ENCODE measurements at regions of chr4 and their contacts with region 1.

Region 1: DNA sequence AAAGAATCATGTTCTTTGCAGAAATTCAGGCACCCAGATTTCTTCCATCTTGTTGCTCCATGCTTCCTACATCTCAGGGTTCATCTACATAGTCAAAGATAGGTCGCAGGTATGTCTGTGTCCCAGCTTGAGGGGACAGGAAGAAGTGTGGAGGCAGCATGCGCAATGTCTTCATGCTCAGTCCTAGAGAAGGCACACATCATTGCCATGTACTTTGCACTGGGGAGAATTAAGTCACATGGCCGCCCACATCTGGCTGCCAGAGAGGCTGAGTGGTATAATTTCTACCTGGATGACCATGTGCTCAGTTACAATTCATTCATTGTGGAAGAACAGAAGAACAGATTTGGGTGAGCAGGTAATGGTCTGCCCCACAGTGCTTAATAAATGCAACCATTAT is 54.1 kb downstream of the GAB1 start:
- DNase-seq: no peak
- ATAC-seq: peak; percentile 25
- H3K4me3 Mint-ChIP-seq: no peak overlapping the region
- H3K27ac Mint-ChIP-seq: no peak overlapping the region
- H3K4me1 Mint-ChIP-seq: peaks cover 48% of the 10 kb centered on the region
- H3K27me3 Mint-ChIP-seq: no peaks in the 10 kb centered on the region
- CTCF ChIP-seq: no peak

Region 2: GRCh38 chr4:143307531-143307930 is 83.2 kb before region 1 on chr4:
- CTCF ChIA-PET with region 1: no interaction called
- POLR2A ChIA-PET with region 1: interaction called, 17 read pairs
- DNase-seq: no peak
- ATAC-seq: no peak
- H3K4me3 Mint-ChIP-seq: no peak overlapping the region
- H3K27ac Mint-ChIP-seq: no peak overlapping the region
- H3K4me1 Mint-ChIP-seq: peaks cover 6% of the 10 kb centered on the region
- H3K27me3 Mint-ChIP-seq: no peaks in the 10 kb centered on the region
- CTCF ChIP-seq: no peak

Region 3: DNA sequence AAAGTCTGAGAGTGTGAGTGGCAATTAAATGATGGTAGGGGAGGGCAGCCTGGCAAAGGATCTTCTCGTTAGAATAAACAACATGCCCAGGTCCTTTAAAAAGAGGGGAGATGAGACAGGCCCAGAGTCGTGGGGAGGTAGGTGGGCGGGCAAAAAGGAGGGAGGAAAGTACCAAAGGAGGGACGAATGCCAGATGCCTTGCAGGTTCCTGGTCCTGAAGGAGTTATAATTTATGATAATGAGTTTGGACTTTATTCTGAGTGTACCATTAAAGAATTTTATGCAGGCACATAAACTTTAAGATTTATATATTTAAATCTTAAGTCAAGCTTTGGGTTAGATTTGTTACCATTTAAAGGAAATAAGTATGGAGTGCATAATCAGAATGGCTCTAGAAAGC is 60.4 kb after region 1 on chr4:
- CTCF ChIA-PET with region 1: no interaction called
- POLR2A ChIA-PET with region 1: no interaction called
- DNase-seq: no peak
- ATAC-seq: no peak
- H3K4me3 Mint-ChIP-seq: no peak overlapping the region
- H3K27ac Mint-ChIP-seq: peak overlapping the region; percentile 28; the same call in 1 of the 2 replicates
- H3K4me1 Mint-ChIP-seq: peaks cover 22% of the 10 kb centered on the region
- H3K27me3 Mint-ChIP-seq: no peaks in the 10 kb centered on the region
- CTCF ChIP-seq: no peak

Region 4: DNA sequence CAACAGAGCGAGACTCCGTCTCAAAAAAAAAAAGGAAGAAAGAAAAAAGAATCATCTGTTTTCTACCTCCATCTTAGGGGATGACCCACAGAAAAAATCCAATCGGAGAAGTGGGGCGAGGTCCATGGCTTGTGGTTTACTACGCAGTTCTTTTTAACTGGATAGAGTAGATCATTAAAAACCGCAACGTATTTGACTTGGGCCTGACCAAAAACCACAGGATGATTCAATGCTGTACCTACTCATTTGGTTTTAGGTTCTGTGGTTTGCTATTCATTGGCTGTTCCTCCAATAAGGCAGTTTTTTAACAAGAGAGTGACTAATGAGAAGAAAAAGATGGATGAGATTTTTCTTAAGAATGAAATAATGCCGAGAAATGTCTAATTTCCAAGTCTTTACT is 226.0 kb after region 1 on chr4:
- CTCF ChIA-PET with region 1: no interaction called
- POLR2A ChIA-PET with region 1: no interaction called
- DNase-seq: no peak
- ATAC-seq: no peak
- H3K4me3 Mint-ChIP-seq: no peak overlapping the region
- H3K27ac Mint-ChIP-seq: no peak overlapping the region
- H3K4me1 Mint-ChIP-seq: no peaks in the 10 kb centered on the region
- H3K27me3 Mint-ChIP-seq: no peaks in the 10 kb centered on the region
- CTCF ChIP-seq: no peak